Activated naive CD4-positive, alpha-beta T cell treated with anti-CD3 and anti-CD28 coated beads for 36 hours (primary cell): ENCODE measurements at regions of chr17 and their contacts with region 1.

Region 1: DNA sequence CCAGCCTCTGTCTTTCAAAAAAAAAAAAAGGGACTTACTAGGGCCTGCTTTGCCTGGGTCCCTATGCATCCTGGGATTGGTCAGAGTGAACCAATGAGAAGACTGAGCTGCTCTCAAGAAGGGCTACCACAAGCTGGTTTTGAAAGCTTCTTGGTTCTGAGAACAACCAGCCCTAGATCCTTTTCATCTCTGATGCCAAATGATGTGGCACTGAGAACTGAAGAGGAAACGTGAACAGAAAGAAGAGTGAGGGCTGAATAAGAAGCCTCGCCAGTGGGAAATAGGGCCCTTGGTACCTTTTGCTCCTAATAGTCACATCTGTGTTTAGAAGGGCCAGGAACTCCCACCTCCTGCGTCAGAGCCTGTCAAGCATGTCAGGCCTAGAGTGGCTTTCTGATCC is 10.7 kb downstream of the TACO1 start:
- DNase-seq: peak; percentile 65
- H3K4me3 Mint-ChIP-seq: peak overlapping the region; percentile 66
- H3K27ac Mint-ChIP-seq: peak overlapping the region; percentile 97
- H3K4me1 Mint-ChIP-seq: peaks cover 28% of the 10 kb centered on the region
- H3K27me3 Mint-ChIP-seq: no peaks in the 10 kb centered on the region

Region 2: DNA sequence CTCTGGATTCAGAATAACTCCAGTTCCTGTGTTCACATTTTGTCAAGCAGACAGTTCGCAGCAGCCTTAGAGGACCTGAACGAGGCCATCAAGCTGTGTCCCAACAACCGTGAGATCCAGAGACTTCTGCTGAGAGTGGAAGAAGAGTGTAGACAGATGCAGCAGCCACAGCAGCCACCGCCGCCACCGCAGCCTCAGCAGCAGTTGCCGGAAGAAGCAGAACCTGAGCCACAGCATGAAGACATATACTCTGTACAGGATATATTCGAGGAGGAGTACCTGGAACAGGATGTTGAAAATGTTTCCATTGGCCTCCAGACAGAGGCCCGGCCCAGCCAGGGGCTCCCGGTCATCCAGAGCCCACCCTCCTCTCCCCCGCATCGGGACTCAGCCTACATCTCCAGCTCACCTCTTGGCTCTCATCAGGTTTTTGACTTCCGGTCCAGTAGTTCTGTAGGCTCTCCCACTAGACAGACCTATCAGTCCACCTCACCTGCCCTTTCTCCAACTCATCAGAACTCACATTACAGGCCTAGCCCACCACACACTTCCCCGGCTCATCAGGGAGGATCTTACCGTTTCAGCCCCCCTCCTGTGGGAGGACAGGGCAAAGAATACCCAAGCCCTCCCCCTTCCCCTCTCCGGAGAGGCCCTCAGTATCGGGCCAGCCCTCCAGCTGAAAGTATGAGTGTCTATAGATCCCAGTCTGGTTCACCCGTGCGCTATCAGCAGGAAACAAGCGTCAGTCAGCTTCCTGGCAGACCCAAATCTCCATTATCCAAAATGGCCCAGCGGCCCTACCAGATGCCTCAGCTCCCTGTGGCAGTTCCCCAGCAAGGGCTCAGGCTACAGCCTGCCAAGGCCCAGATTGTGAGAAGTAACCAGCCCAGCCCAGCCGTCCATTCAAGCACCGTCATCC is 191.1 kb before region 1 on chr17:
- CTCF ChIA-PET with region 1: interaction called, 99 read pairs
- intact Hi-C with region 1: loop called (anchors 1 kb)
- DNase-seq: peak; percentile 62
- H3K4me3 Mint-ChIP-seq: no peak overlapping the region
- H3K27ac Mint-ChIP-seq: peak overlapping the region; percentile 27
- H3K4me1 Mint-ChIP-seq: peaks cover 13% of the 10 kb centered on the region
- H3K27me3 Mint-ChIP-seq: no peaks in the 10 kb centered on the region

Region 3: GRCh38 chr17:63434876-63435684 is 176.3 kb before region 1 on chr17:
- CTCF ChIA-PET with region 1: interaction called, 99 read pairs
- intact Hi-C with region 1: no loop called
- DNase-seq: peak; percentile 28
- H3K4me3 Mint-ChIP-seq: no peak overlapping the region
- H3K27ac Mint-ChIP-seq: no peak overlapping the region
- H3K4me1 Mint-ChIP-seq: peaks cover 17% of the 10 kb centered on the region
- H3K27me3 Mint-ChIP-seq: no peaks in the 10 kb centered on the region

Region 4: DNA sequence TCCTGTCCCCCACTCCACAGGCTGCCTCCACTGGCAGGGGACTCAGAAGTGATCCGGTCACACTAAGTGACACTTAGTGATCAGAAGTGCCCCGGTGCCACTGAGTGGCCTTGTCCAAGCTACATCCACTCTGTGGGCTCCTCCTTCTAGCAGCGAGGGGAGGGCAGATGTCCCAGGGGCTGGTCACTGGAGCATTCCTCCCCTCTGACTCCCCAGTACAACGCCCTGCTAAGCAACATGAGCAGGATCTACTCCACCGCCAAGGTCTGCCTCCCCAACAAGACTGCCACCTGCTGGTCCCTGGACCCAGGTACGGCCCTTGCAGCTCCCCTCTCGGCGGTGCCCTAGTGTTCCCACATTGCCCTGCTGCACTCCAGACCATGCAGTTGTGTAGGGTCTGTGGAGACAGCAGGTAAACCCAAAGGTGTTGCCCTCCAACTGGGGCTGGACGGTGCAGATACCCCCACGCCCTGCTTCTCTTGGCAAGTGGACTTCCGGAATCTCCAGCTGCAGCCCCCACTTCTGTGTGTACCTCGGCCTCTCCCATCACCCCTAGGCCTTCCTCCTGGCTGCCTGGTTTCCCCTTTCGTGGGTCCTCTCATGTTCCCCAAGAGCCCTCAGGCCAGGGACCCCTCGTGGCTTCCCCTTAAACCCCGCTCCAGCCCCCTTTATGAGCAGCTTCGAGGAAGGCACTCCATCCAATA is 132.4 kb before region 1 on chr17:
- CTCF ChIA-PET with region 1: interaction called, 10 read pairs
- intact Hi-C with region 1: no loop called
- DNase-seq: peak; percentile 87
- H3K4me3 Mint-ChIP-seq: no peak overlapping the region
- H3K27ac Mint-ChIP-seq: no peak overlapping the region
- H3K4me1 Mint-ChIP-seq: peaks cover 5% of the 10 kb centered on the region
- H3K27me3 Mint-ChIP-seq: peaks cover 34% of the 10 kb centered on the region

Region 5: GRCh38 chr17:63600569-63601438 is 10.6 kb before region 1 on chr17 and contains the start of gene TACO1:
- CTCF ChIA-PET with region 1: interaction called, 22 read pairs
- intact Hi-C with region 1: no loop called
- DNase-seq: peak; percentile 88
- H3K4me3 Mint-ChIP-seq: peak within 1 kb of the TSS; percentile 97
- H3K27ac Mint-ChIP-seq: peak within 1 kb of the TSS; percentile 84
- H3K4me1 Mint-ChIP-seq: peaks cover 29% of the 10 kb centered on the region
- H3K27me3 Mint-ChIP-seq: no peaks in the 10 kb centered on the region
- total RNA-seq, gene TACO1: 27.6 to 28.9 TPM

Region 6: DNA sequence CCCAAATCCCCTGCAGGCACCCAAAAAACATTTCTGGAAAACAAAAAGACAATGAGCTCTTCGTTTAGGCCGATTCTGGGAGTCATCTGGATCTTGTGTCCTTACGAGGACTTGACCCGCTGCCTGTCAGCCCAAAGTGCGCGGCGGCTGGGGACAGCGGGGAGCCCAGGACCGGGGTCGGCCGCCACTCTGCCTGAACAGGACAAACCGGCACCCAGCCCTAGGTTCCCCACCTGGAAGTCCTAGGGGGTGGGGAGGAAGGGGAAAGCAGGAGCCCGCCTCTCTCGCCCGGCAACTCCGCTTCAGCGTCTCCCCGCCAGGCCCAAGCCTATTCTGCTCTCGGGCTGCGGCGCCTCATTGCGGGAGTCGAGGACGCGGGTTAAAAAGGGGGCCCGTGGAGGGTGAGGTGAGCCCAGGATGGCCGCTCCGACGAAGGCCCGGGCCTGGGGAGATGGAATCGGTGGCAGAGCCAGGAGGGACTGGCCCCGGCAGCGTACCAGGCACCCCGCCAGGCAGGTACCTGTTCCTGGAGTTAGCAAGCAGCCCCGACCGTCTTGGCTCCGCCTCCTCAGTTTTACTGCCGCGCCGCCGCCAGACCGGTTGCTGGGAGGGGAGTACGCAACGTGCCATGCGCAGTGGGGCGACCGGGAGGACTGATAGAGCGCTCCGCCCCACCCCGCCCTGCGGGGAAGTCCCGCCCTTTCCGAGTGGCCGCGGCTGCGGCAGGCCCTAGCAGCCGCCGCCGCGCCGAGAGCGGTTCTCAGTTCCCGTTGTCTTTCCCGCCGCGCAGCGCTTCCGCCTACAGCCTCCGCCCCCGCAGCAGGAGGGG is 130.1 kb after region 1 on chr17 and contains the start of gene STRADA:
- CTCF ChIA-PET with region 1: no interaction called
- intact Hi-C with region 1: no loop called
- DNase-seq: peak; percentile 100
- H3K4me3 Mint-ChIP-seq: peak within 1 kb of the TSS; percentile 95
- H3K27ac Mint-ChIP-seq: peak within 1 kb of the TSS; percentile 99
- H3K4me1 Mint-ChIP-seq: peaks cover 20% of the 10 kb centered on the region
- H3K27me3 Mint-ChIP-seq: no peaks in the 10 kb centered on the region
- total RNA-seq, gene STRADA: 73.2 to 76.3 TPM